GM12878 (cell line): ENCODE measurements at regions of chr5 and their contacts with region 1.

Region 1: GRCh38 chr5:71601222-71602041 is 14.3 kb downstream of the MCCC2 start:
- DNase-seq: peak; percentile 20
- ATAC-seq: peak; percentile 99
- H3K4me3 ChIP-seq: no peak overlapping the region
- H3K27ac ChIP-seq: no peak overlapping the region
- H3K4me1 ChIP-seq: no peaks in the 10 kb centered on the region
- H3K27me3 ChIP-seq: no peaks in the 10 kb centered on the region
- CTCF ChIP-seq: peak; percentile 64 to 83 (median 74)
- EP300 ChIP-seq: no peak
- POLR2A ChIP-seq: no peak
- RAD21 ChIP-seq: peak; percentile 47

Region 2: DNA sequence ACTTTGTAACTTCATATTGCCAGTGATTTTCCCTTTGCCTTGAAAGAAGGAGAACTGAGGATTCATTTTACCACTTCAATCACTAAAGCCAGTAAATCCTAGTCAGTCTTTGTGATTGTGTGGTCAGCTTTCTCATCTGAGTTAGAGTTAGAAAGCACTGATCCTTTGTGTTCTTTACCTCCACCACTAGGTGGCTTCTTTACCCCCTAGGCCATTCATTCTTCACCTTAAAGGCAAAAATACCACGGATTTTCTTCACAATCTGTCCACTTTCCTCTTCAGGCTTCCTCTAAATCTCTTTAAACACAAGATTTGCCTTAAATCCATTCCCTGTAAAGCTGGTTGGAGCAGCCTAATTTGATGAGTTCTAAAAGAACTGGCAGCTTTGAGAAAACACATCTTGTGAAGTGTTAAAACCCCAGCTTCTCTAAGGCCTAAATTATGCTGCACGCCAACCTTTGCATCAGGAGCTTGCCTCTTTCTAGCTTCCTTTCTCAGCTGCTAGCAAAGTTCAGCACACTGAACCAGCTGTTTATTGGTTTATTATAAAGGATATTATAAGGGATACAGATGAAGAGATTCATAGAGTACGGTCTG is 125.5 kb before region 1 on chr5:
- CTCF ChIA-PET with region 1: interaction called, 24 read pairs
- POLR2A ChIA-PET with region 1: interaction called, 4 read pairs
- RAD21 ChIA-PET with region 1: interaction called, 11 read pairs
- SMC1A ChIA-PET with region 1: interaction called, 5 read pairs
- in situ Hi-C with region 1: no loop called
- intact Hi-C with region 1: no loop called
- DNase-seq: no peak
- ATAC-seq: peak; percentile 91
- H3K4me3 ChIP-seq: no peak overlapping the region
- H3K27ac ChIP-seq: no peak overlapping the region
- H3K4me1 ChIP-seq: no peaks in the 10 kb centered on the region
- H3K27me3 ChIP-seq: no peaks in the 10 kb centered on the region
- CTCF ChIP-seq: peak; percentile 53 to 72 (median 65)
- EP300 ChIP-seq: no peak
- POLR2A ChIP-seq: no peak
- RAD21 ChIP-seq: peak; percentile 40

Region 3: GRCh38 chr5:71586941-71587765 is 14.3 kb before region 1 on chr5 and contains the start of gene MCCC2:
- CTCF ChIA-PET with region 1: interaction called, 44 read pairs
- POLR2A ChIA-PET with region 1: interaction called, 7 read pairs
- RAD21 ChIA-PET with region 1: interaction called, 7 read pairs
- SMC1A ChIA-PET with region 1: interaction called, 22 read pairs
- in situ Hi-C with region 1: no loop called
- intact Hi-C with region 1: no loop called
- DNase-seq: peak; percentile 89
- ATAC-seq: peak; percentile 97
- H3K4me3 ChIP-seq: peak within 1 kb of the TSS; percentile 98
- H3K27ac ChIP-seq: peak within 1 kb of the TSS; percentile 91
- H3K4me1 ChIP-seq: peaks cover 2% of the 10 kb centered on the region; the same call in 1 of the 2 replicates
- H3K27me3 ChIP-seq: no peaks in the 10 kb centered on the region
- CTCF ChIP-seq: no peak
- EP300 ChIP-seq: no peak
- POLR2A ChIP-seq: peak; percentile 98
- RAD21 ChIP-seq: no peak
- polyA plus RNA-seq, gene MCCC2: 22.2 to 29.1 TPM

Region 4: DNA sequence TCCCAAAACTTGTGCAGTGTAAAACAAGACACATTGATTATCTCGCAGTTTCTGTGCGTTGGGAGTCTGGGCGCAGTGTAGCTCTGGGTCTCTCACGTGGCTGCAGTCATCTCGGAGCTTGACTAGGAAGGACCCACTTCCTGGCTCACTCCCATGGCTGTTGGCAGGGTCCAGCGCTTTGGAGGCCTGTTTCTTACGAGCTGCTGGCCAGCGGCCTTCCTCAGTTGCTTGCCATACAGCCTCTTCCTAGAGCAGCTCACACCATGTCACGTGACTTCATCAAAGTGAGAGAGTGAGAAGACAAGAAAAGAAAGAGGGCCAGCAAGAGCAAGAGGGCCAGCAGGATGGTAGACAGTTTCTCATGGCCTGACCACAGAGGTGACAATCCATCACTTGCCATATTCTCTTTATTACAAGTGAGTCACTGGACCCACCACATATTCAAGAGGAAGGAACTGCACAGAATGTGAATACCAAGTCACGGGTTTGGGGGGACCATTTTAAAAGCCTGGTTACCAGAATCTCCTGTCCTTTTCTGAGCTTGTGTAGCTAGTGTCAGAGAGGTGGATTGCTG is 21.9 kb after region 1 on chr5:
- CTCF ChIA-PET with region 1: no interaction called
- POLR2A ChIA-PET with region 1: no interaction called
- RAD21 ChIA-PET with region 1: no interaction called
- SMC1A ChIA-PET with region 1: no interaction called
- in situ Hi-C with region 1: no loop called
- intact Hi-C with region 1: no loop called
- DNase-seq: no peak
- ATAC-seq: no peak
- H3K4me3 ChIP-seq: no peak overlapping the region
- H3K27ac ChIP-seq: no peak overlapping the region
- H3K4me1 ChIP-seq: no peaks in the 10 kb centered on the region
- H3K27me3 ChIP-seq: no peaks in the 10 kb centered on the region
- CTCF ChIP-seq: no peak
- EP300 ChIP-seq: no peak
- POLR2A ChIP-seq: no peak
- RAD21 ChIP-seq: no peak

Region 5: GRCh38 chr5:71633255-71634155 is 32.1 kb after region 1 on chr5:
- CTCF ChIA-PET with region 1: interaction called, 8 read pairs
- POLR2A ChIA-PET with region 1: interaction called, 8 read pairs
- RAD21 ChIA-PET with region 1: no interaction called
- SMC1A ChIA-PET with region 1: no interaction called
- in situ Hi-C with region 1: no loop called
- intact Hi-C with region 1: loop called (anchors 1 kb)
- DNase-seq: no peak
- ATAC-seq: peak; percentile 89
- H3K4me3 ChIP-seq: no peak overlapping the region
- H3K27ac ChIP-seq: no peak overlapping the region
- H3K4me1 ChIP-seq: no peaks in the 10 kb centered on the region
- H3K27me3 ChIP-seq: no peaks in the 10 kb centered on the region
- CTCF ChIP-seq: no peak
- EP300 ChIP-seq: no peak
- POLR2A ChIP-seq: no peak
- RAD21 ChIP-seq: no peak

Region 6: DNA sequence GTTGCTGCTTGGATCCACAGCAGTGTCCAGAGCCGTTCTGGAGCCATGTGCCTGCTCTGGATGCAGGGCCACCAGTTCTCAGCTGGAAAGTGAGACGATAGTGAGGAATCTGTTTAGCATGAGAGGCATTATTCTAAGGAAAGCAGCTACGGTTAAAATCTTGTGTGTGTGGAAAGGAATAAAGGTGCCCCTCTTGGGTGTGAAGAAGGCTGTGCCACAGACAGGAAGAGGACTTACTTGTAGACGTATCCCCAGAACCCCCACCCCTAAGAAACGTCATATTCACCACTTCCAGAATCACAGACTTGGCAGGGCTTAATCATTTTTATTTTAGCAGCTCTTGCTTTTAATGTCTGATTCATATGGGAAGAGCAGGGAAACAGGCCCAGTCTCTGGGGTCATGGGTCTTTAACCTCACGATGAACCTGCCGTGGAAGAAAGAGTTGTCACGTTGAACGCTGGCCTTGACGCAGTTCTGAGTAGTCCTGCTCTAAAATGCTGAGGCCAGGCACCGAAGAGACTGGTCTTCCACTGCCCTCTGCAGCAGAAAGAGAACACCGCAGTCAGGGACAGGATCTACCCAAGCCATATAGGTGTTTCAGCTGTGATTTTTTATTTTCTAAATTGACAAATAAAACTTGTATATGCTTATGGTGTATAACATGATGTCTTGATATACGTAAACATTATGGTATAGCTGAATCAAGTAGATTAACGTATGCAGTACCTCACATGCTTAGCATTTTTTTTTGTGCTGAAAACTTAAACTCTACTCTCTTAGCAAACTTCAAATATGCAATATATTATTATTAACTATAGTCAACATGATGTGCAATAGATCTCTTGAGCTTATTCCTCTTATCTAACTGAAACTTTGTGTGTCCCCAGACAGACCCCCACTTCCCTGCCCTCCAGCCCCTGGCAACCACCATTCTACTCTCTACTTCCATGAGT is 156.4 kb after region 1 on chr5:
- CTCF ChIA-PET with region 1: interaction called, 3 read pairs
- POLR2A ChIA-PET with region 1: no interaction called
- RAD21 ChIA-PET with region 1: no interaction called
- SMC1A ChIA-PET with region 1: no interaction called
- in situ Hi-C with region 1: no loop called
- intact Hi-C with region 1: loop called (anchors 1 kb)
- DNase-seq: peak; percentile 12
- ATAC-seq: peak; percentile 100
- H3K4me3 ChIP-seq: no peak overlapping the region
- H3K27ac ChIP-seq: no peak overlapping the region
- H3K4me1 ChIP-seq: no peaks in the 10 kb centered on the region
- H3K27me3 ChIP-seq: no peaks in the 10 kb centered on the region
- CTCF ChIP-seq: peak; percentile 75 to 90 (median 82)
- EP300 ChIP-seq: no peak
- POLR2A ChIP-seq: no peak
- RAD21 ChIP-seq: peak; percentile 92

Region 7: DNA sequence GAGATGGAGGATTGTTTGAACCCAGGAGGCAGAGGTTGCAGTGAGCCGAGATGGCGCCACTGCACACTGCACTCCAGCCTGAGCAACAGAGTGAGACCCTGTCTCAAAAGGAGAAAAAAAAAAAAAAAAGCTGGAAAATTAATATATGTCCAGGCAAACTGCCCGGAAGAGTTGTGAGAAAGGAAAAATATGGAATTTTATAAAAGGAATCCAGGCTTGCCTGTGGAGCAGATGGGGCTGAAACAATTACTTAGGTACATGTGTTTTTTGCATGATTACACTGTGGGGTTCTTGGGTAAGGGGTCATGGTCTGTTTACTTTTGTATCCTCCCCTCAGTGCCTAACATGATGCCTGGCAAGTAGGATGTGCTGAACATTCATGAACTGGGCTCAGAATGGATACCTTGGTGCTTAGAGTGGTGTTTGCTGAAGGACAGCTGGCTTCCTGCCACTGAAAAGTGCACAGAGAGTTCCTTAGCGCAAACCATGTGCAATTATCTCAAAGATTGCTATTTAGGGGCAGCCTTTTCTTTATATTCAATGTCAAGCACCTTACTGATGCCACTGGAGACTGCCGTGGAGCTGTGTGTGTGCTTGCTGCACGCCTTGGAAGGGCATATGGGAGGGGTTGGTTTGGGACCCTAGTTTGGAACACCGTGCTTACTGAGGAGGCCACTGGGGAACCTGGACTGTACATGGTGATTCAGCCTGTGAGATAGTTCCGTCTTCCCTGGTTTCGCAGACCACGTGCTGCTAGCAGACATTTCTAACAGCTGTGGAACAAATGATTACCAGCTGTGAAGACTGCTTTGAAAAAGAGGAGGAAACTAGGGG is 584.3 kb after region 1 on chr5:
- CTCF ChIA-PET with region 1: no interaction called
- POLR2A ChIA-PET with region 1: no interaction called
- RAD21 ChIA-PET with region 1: no interaction called
- SMC1A ChIA-PET with region 1: no interaction called
- in situ Hi-C with region 1: no loop called
- intact Hi-C with region 1: no loop called
- DNase-seq: no peak
- ATAC-seq: no peak
- H3K4me3 ChIP-seq: no peak overlapping the region
- H3K27ac ChIP-seq: no peak overlapping the region
- H3K4me1 ChIP-seq: no peaks in the 10 kb centered on the region
- H3K27me3 ChIP-seq: peaks cover 0 to 7% of the 10 kb centered on the region in 2 experiments; a peak in 2 of 4 replicates
- CTCF ChIP-seq: no peak
- EP300 ChIP-seq: no peak
- POLR2A ChIP-seq: no peak
- RAD21 ChIP-seq: no peak